Activated B cell treated with CpG ODN at 0.5 μM for 24 hours (primary cell): ENCODE measurements at regions of chr10 and their contacts with region 1.

Region 1: GRCh38 chr10:99845837-99846382 is 63.5 kb downstream of the ABCC2 start:
- DNase-seq: peak; percentile 28
- ATAC-seq: peak; percentile 77
- H3K4me3 Mint-ChIP-seq: peak overlapping the region; percentile 50
- H3K27ac Mint-ChIP-seq: no peak overlapping the region
- H3K4me1 Mint-ChIP-seq: peaks cover 8% of the 10 kb centered on the region
- H3K27me3 Mint-ChIP-seq: no peaks in the 10 kb centered on the region
- CTCF ChIP-seq: no peak

Region 2: GRCh38 chr10:100009793-100010676 is 164.1 kb after region 1 on chr10 and contains the start of gene DNMBP:
- CTCF ChIA-PET with region 1: interaction called, 22 read pairs
- POLR2A ChIA-PET with region 1: interaction called, 5 read pairs
- intact Hi-C with region 1: loop called (anchors 1 kb)
- DNase-seq: peak; percentile 88
- ATAC-seq: peak; percentile 88
- H3K4me3 Mint-ChIP-seq: peak within 1 kb of the TSS; percentile 91
- H3K27ac Mint-ChIP-seq: peak within 1 kb of the TSS; percentile 89
- H3K4me1 Mint-ChIP-seq: peaks cover 75% of the 10 kb centered on the region
- H3K27me3 Mint-ChIP-seq: no peaks in the 10 kb centered on the region
- CTCF ChIP-seq: no peak
- total RNA-seq, gene DNMBP: 12.5 and 13.1 TPM in 2 replicates

Region 3: DNA sequence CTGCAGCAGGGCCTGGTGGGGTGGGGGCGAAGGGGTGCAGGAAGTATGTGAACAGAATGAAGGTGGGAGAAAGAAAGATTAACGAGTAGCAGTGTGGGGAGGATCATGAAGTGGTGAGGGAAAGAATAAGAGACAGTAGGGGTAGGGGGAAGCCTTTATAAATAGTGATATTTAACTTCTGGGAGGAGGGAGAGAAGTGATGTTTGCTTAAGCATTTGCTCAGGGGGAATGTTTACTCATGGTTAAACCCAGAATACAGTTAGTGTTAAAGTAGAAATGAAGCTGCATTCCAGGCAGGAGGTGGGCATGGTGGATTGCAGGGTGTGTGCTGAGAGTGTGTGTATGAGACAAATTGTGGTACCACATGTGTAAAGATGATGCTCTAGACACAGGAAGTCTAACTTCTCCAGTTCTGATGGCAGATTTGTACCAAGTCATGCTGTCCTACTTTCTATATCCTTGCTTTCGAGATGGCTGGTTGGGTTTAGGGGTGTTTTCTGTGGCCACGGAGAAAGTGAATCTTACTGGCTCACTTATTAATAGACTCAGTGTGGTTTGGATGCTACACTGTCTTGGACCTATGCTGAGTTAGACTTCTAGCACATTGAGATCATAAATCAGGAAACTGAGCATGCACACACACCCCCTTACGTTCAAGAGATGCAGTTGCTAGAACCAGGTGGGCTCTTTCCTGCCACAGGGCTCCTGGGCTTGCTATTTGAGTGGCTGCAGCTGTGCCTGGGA is 174.4 kb after region 1 on chr10:
- CTCF ChIA-PET with region 1: interaction called, 10 read pairs
- POLR2A ChIA-PET with region 1: no interaction called
- intact Hi-C with region 1: no loop called
- DNase-seq: no peak
- ATAC-seq: peak; percentile 68
- H3K4me3 Mint-ChIP-seq: no peak overlapping the region
- H3K27ac Mint-ChIP-seq: no peak overlapping the region
- H3K4me1 Mint-ChIP-seq: peaks cover 22% of the 10 kb centered on the region
- H3K27me3 Mint-ChIP-seq: no peaks in the 10 kb centered on the region
- CTCF ChIP-seq: no peak

Region 4: GRCh38 chr10:100053686-100054460 is 208.0 kb after region 1 on chr10:
- CTCF ChIA-PET with region 1: interaction called, 237 read pairs
- POLR2A ChIA-PET with region 1: no interaction called
- intact Hi-C with region 1: no loop called
- DNase-seq: no peak
- ATAC-seq: no peak
- H3K4me3 Mint-ChIP-seq: no peak overlapping the region
- H3K27ac Mint-ChIP-seq: no peak overlapping the region
- H3K4me1 Mint-ChIP-seq: no peaks in the 10 kb centered on the region
- H3K27me3 Mint-ChIP-seq: peaks cover 7% of the 10 kb centered on the region
- CTCF ChIP-seq: no peak

Region 5: GRCh38 chr10:100114976-100115770 is 269.3 kb after region 1 on chr10:
- CTCF ChIA-PET with region 1: no interaction called
- POLR2A ChIA-PET with region 1: no interaction called
- intact Hi-C with region 1: no loop called
- DNase-seq: no peak
- ATAC-seq: no peak
- H3K4me3 Mint-ChIP-seq: no peak overlapping the region
- H3K27ac Mint-ChIP-seq: no peak overlapping the region
- H3K4me1 Mint-ChIP-seq: no peaks in the 10 kb centered on the region
- H3K27me3 Mint-ChIP-seq: peaks cover 21% of the 10 kb centered on the region
- CTCF ChIP-seq: no peak